Activated CD4-positive, alpha-beta T cell treated with anti-CD3 and anti-CD28 coated beads for 36 hours (primary cell): ENCODE measurements at regions of chr16 and their contacts with region 1.

Region 1: DNA sequence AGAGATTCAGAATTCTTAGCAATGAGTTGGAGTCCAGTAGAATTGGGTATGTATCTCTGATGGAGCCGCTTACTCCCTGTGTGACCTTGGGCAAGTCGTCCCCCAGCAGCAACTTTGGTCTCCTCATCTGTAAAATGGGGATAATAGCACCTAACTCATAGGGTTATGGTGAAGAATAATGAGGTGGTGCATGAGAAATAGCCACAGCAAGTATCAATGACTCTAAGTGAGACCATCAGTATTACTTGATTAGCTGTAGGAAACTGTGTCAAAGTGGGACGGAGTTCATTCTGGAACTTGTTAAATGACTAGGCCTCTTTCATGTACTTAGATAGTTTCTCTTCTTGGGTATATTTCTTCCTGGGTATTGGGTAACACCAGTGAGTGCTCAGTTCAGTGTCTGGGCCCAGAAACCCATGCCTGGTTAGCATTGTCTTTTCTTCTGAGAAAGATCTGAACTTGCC is 6.4 kb downstream of the PRKCB start:
- DNase-seq: peak; percentile 67
- ATAC-seq: peak; percentile 91
- H3K4me3 Mint-ChIP-seq: no peak overlapping the region
- H3K27ac Mint-ChIP-seq: peak overlapping the region; percentile 85
- H3K4me1 Mint-ChIP-seq: peaks cover 83% of the 10 kb centered on the region
- H3K27me3 Mint-ChIP-seq: no peaks in the 10 kb centered on the region

Region 2: DNA sequence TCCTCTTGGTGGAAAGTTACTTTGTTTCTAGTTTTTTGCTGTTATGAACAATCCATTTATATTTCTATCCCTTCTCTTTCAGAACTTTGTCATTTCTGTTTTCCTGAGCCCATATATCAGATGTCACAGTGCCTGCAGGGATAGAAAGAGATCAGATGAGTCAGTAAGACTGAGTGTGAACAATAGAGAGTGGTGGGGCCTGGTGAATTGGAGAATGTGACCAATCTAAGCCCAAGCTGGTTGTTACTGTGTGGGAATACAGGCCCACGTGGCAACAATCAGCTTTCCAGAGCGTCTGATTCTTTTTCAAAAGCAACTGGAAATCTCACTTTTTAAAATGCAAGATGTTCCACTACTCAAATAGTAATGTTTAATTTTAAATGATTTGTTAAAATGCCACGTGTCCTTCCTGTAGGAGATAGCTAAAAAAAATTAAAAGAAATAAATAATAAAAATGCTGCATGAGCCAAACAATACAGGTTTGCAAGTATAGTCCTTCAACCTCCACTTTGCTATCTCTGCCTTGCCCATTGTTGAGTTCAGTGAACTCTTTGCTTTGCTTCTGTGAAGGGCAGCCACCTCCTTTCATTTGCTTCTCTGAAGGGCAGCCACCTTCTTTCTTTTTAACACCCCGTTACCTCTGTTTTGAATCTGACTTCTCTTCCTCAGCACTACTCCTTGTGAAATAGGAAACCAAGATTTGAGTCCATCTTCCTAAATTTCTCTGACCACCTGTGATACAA is 191.3 kb before region 1 on chr16:
- CTCF ChIA-PET with region 1: no interaction called
- POLR2A ChIA-PET with region 1: no interaction called
- intact Hi-C with region 1: no loop called
- DNase-seq: peak; percentile 14
- ATAC-seq: peak; percentile 81
- H3K4me3 Mint-ChIP-seq: no peak overlapping the region
- H3K27ac Mint-ChIP-seq: peak overlapping the region; percentile 66
- H3K4me1 Mint-ChIP-seq: peaks cover 41% of the 10 kb centered on the region
- H3K27me3 Mint-ChIP-seq: no peaks in the 10 kb centered on the region

Region 3: DNA sequence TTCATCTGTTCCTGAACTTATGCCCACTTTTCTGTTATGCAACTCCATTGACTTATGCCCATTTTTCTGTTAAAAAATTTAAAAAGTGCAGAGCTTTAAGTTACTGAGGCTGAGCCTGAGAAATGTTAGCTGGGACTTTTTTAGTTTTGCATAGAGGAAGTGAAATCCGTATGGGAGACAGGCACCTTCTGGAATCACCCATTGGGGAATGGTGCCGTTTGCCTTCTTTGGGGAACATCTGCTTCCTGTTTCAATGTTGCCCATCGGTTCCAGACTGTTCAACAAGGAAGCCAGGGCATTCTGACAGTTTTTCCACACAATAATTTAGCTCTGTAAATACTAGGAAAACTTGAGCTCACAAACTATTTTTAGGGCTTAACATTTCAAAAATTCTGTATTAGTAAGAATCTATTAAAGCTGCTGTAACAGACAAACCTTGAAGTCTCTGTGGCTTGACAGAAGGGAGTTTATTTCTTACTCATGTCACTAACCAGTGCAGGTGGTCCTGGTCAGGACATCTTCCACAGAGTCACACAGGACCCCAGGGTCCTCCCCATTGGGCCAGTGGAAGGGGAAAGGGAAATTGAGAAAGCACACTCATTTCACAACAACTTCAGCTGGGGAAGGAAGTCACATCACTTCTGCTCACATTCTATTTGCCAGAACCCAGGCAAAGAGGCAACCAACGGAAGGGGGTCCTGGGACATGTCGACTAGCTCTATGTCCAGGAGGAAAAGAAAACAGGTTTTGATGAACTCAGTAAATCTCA is 10.8 kb after region 1 on chr16:
- CTCF ChIA-PET with region 1: interaction called, 4 read pairs
- POLR2A ChIA-PET with region 1: no interaction called
- intact Hi-C with region 1: loop called (anchors 1 kb)
- DNase-seq: no peak
- ATAC-seq: peak; percentile 18
- H3K4me3 Mint-ChIP-seq: no peak overlapping the region
- H3K27ac Mint-ChIP-seq: peak overlapping the region; percentile 66
- H3K4me1 Mint-ChIP-seq: peaks cover 88% of the 10 kb centered on the region
- H3K27me3 Mint-ChIP-seq: no peaks in the 10 kb centered on the region

Region 4: GRCh38 chr16:23877107-23878090 is 35.2 kb after region 1 on chr16:
- CTCF ChIA-PET with region 1: interaction called, 7 read pairs
- POLR2A ChIA-PET with region 1: interaction called, 4 read pairs
- intact Hi-C with region 1: loop called in 1 of 2 experiments (anchors 5 kb)
- DNase-seq: peak; percentile 52
- ATAC-seq: peak; percentile 73
- H3K4me3 Mint-ChIP-seq: no peak overlapping the region
- H3K27ac Mint-ChIP-seq: peak overlapping the region; percentile 55
- H3K4me1 Mint-ChIP-seq: peaks cover 75% of the 10 kb centered on the region
- H3K27me3 Mint-ChIP-seq: no peaks in the 10 kb centered on the region

Region 5: DNA sequence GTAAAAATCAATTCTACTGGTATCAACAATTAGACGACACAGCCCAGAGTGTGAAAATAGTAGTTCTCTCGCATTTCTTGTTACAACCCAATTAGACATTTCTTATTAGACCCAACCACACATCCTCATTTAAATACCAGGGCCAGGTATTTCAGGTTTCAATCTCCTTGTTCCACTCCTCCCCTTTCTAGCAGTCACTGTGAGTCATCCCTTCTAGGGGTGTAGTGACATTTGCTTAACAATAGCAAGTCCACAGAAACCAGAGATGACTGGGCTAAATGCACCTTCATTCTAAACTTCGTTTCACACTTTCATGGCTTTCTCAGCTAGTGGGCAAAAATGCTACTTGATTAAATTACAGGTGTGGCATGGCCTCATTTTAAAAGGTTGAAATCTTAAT is 297.1 kb after region 1 on chr16:
- CTCF ChIA-PET with region 1: no interaction called
- POLR2A ChIA-PET with region 1: no interaction called
- intact Hi-C with region 1: loop called in 1 of 2 experiments (anchors 1 kb)
- DNase-seq: peak; percentile 27
- ATAC-seq: peak; percentile 99
- H3K4me3 Mint-ChIP-seq: no peak overlapping the region
- H3K27ac Mint-ChIP-seq: peak overlapping the region; percentile 24
- H3K4me1 Mint-ChIP-seq: peaks cover 24% of the 10 kb centered on the region
- H3K27me3 Mint-ChIP-seq: no peaks in the 10 kb centered on the region